B cell (primary cell): ENCODE measurements at regions of chr20 and their contacts with region 1.

Region 1: DNA sequence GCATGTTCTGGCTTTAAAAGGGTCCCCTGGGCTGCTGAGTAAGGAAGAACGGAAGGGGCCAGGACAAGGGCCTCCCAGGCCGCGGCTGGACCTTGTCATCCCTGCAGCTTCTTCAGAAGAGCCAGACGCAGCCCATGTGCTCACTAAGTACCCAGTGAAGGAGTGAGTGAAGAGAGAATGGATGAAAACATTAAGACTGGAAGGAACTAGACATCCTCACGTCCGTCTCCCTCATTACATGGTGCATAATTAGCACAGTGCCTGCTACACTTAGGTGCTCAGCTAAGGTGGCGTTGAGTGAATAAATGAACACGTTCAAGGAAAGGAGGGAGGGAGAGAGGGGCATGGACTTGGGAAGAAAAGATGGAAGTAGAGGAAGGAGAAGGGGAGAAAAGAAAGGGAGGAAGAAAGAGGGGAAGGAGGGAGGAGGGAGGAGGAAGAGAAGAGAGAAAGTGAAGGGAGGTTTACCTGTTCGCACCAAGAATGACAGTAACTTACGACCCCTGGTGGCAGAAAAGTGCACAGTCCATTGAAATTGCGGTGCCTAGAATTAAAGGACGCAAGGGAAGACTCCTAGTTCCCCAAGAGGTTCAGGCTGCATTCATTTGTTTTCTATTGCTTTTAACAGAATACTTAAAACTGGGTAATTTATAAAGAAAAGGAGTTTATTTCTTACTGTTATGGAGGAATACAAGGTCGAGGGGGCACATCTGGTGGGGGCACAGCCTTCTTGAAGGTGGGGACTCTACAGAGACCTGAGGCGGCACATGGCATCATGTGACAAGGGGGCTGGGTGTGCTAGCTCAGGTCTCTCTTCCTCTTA is 8.0 kb downstream of the TP53RK start:
- DNase-seq: peak; percentile 77
- ATAC-seq: peak; percentile 77
- H3K4me3 ChIP-seq: no peak overlapping the region
- H3K4me3 Mint-ChIP-seq: no peak overlapping the region
- H3K27ac ChIP-seq: no peak overlapping the region
- H3K27ac Mint-ChIP-seq: no peak overlapping the region
- H3K4me1 ChIP-seq: peaks cover 7 to 10% of the 10 kb centered on the region in 2 donors
- H3K4me1 Mint-ChIP-seq: peaks cover 32% of the 10 kb centered on the region
- H3K27me3 ChIP-seq: no peaks in the 10 kb centered on the region
- H3K27me3 Mint-ChIP-seq: no peaks in the 10 kb centered on the region
- CTCF ChIP-seq: peak; percentile 91

Region 2: DNA sequence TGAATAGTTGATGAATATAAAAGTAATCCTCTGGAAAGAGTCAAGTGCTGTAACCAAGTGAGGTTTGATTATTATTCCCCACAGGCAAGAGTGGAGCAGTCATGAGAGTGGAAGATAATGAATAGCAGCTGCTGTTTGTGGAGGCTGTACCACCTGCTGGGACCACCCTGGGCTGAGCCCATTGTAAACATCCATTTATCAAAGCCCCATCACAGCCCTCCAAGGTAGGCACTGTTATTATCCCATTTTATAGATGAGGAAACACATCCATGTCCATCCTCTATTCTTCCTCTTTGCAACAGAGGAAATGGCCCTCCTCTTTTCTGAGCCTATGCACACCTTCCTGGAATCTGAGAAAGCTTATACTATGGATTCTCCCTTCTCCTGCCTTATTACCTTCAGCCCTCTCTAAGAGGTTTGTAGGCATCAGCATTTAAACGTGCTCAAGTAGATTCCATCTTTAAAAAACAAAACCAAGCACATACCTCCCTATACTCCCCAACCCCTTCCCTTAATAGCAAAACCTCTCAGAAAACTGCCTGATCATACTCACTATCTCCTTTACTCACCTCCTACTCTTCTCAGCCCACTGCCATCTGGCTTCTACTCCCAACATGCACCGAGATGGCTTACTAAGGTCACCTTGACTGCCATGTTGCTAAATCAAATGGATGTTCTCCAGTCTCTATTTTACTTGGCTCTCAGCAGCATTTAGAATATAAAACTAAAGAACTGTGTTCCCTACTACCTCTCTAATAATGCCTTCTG is 410.1 kb before region 1 on chr20:
- CTCF ChIA-PET with region 1: no interaction called
- POLR2A ChIA-PET with region 1: no interaction called
- intact Hi-C with region 1: no loop called
- DNase-seq: no peak
- ATAC-seq: no peak
- H3K4me3 ChIP-seq: no peak overlapping the region
- H3K4me3 Mint-ChIP-seq: no peak overlapping the region
- H3K27ac ChIP-seq: no peak overlapping the region
- H3K27ac Mint-ChIP-seq: no peak overlapping the region
- H3K4me1 ChIP-seq: no peaks in the 10 kb centered on the region
- H3K4me1 Mint-ChIP-seq: no peaks in the 10 kb centered on the region
- H3K27me3 ChIP-seq: peaks cover 0 to 57% (median 5%) of the 10 kb centered on the region in 4 experiments
- H3K27me3 Mint-ChIP-seq: peaks cover 68% of the 10 kb centered on the region
- CTCF ChIP-seq: no peak

Region 3: GRCh38 chr20:46520976-46521579 is 160.2 kb before region 1 on chr20:
- CTCF ChIA-PET with region 1: interaction called, 49 read pairs
- POLR2A ChIA-PET with region 1: interaction called, 5 read pairs
- intact Hi-C with region 1: no loop called
- DNase-seq: peak; percentile 62
- ATAC-seq: peak; percentile 58
- H3K4me3 ChIP-seq: no peak overlapping the region
- H3K4me3 Mint-ChIP-seq: no peak overlapping the region
- H3K27ac ChIP-seq: no peak overlapping the region
- H3K27ac Mint-ChIP-seq: no peak overlapping the region
- H3K4me1 ChIP-seq: no peaks in the 10 kb centered on the region
- H3K4me1 Mint-ChIP-seq: no peaks in the 10 kb centered on the region
- H3K27me3 ChIP-seq: peaks cover 0 to 12% (median 2%) of the 10 kb centered on the region in 4 experiments
- H3K27me3 Mint-ChIP-seq: peaks cover 14% of the 10 kb centered on the region
- CTCF ChIP-seq: peak; percentile 70

Region 4: GRCh38 chr20:46694494-46694893 is 13.3 kb after region 1 on chr20:
- CTCF ChIA-PET with region 1: interaction called, 18 read pairs
- POLR2A ChIA-PET with region 1: no interaction called
- intact Hi-C with region 1: no loop called
- DNase-seq: peak; percentile 20
- ATAC-seq: no peak
- H3K4me3 ChIP-seq: no peak overlapping the region
- H3K4me3 Mint-ChIP-seq: no peak overlapping the region
- H3K27ac ChIP-seq: no peak overlapping the region
- H3K27ac Mint-ChIP-seq: no peak overlapping the region
- H3K4me1 ChIP-seq: peaks cover 0 to 4% of the 10 kb centered on the region in 2 donors
- H3K4me1 Mint-ChIP-seq: peaks cover 11% of the 10 kb centered on the region
- H3K27me3 ChIP-seq: peaks cover 0 to 12% (median 2%) of the 10 kb centered on the region in 4 experiments
- H3K27me3 Mint-ChIP-seq: peaks cover 16% of the 10 kb centered on the region
- CTCF ChIP-seq: no peak